ENCODE measurements at regions of chr16 and their contacts with region 1.

Region 1: DNA sequence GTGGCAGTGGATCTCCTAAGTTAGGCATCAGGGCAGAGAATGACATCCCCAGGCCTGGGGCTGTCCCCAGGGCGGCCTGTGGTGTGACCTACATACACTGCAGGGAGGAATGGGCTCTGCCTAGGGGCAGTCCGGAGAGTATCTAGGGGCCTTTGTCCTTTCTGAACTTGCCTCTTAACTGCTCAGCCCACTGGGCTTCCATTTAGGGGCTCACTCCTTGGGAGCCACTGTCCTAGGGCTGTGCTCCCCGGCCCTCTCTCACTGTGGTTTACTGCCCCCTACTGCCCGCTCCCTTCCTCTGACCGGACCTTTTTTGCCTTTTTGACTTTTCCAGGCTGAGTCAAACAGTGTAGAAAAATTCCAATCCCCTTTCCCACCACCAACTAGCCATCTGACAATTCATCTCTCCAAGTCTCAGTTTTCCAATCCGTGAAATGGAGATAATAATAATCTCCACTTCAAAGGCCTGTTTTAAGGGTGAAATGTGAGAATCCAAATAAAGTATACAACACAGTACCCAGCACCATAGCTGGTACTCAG is 66.8 kb downstream of the DNAH3 start:
- DNase-seq: peak; percentile 39 to 77
- ATAC-seq: peak; percentile 94

Region 2: GRCh38 chr16:20849587-20850390 is 234.0 kb before region 1 on chr16:
- intact Hi-C with region 1: loop called (anchors 5 to 10 kb)
- DNase-seq: peak; percentile 46 to 78
- ATAC-seq: peak; percentile 74

Region 3: GRCh38 chr16:20900299-20901067 is 183.3 kb before region 1 on chr16 and contains the starts of genes DCUN1D3 and LYRM1:
- intact Hi-C with region 1: no loop called
- DNase-seq: peak; percentile 95 to 99
- ATAC-seq: peak; percentile 89
- total RNA-seq, gene DCUN1D3: 12.4 to 14.0 TPM
- total RNA-seq, gene LYRM1: 11.7 to 20.1 TPM

Measured in left colon (tissue), 2 donors.